ENCODE measurements at regions of chr7 and their contacts with region 1.

Region 1: DNA sequence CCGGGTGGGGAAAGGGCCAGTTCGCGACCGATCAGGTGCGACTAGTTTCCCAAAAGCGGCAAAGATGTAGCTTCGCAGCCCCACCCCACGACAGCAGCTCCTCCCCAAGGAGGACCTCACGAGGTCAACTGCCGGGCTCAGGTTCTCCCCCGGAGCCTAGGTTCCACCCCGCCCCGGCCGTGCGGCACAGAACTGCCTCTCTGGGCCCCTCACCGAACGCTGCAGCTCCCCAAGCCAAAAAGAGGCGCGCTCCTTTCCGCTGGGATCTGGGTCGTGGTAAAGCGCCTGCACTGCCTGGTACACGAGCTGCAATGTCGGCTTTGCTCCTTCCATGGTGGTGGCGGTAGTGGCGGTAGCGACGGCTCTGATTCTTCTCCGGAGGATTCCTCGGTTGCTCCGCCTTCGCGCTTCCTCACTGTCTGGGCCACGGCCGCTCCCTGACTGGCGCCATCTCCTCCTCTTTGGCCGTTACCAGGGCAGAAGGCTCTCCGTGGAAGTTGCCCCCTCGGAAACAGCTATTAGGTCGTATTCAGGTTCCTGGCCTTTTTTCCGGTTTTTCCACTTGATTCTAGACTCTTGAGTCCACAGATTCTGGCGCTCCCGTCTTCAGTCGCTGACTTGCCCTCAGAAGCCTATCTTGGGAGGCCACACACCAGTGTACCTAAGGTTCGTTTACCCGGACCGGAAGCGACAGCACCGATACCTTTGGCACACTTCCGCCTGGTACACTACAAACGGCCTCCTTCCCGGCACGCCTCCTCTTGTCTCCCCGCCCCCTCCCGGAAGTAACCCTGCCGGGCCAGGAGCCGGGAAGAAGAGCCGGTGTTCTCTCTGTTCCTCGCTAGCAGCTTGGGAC is at the start of gene TNPO3:
- DNase-seq: peak; percentile 95
- H3K4me3 ChIP-seq: peak within 1 kb of the TSS; percentile 95
- H3K27ac ChIP-seq: peak within 1 kb of the TSS; percentile 88
- H3K4me1 ChIP-seq: peaks cover 36% of the 10 kb centered on the region
- CTCF ChIP-seq: peak; percentile 36; the same call in 1 of the 2 replicates
- total RNA-seq, gene TNPO3: 51.4 and 55.1 TPM in 2 replicates

Region 2: DNA sequence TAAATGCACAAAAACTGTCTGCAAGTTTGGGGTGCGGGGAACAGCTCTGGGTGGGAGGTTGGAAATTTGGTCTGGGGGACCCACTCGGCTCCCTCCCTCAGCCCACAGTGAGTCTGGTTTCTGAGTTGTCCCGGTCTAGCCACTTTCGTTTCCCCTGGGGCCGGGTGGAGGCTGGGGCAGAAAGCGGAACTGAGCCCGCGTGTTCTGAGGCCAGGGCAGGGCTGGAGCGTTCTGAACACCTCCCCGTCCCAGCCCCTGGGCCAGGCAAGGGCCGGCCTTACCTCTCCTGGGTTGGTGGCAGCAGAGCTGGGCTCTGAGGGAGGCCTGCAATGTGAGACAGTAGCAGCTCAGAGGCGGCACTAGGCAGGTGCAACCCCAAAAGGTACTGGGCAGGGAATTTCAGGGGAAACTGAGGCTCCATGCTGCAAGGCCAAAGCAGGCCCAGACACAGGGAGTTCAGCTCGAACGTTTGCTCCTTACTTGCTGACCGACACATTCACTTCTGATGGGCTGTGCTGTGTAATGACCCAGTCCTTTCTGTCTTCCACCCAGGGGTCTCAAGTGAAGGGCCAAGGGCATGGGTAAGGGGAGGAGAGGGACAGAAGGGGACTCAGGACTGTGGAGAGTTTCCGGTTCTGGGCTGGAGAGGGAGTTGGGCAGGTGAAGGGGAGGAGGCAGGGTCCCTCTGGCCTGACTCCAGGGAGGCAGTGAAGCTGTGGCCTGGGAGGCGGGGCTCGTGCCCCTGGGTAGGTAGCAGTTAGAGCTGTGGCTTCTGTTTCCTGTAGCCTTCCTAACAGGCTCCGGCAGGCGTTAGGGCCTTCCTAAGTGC is 114.0 kb before region 1 on chr7:
- CTCF ChIA-PET with region 1: interaction called, 6 read pairs
- POLR2A ChIA-PET with region 1: interaction called, 12 read pairs
- intact Hi-C with region 1: no loop called
- DNase-seq: peak; percentile 93
- H3K4me3 ChIP-seq: peak overlapping the region; percentile 60
- H3K27ac ChIP-seq: peak overlapping the region; percentile 75
- H3K4me1 ChIP-seq: peaks cover 37% of the 10 kb centered on the region
- CTCF ChIP-seq: 0 out of 2 replicates have a peak, but pooled peaks have one; percentile 4

Region 3: GRCh38 chr7:128954830-128955802 is 99.5 kb before region 1 on chr7:
- CTCF ChIA-PET with region 1: no interaction called
- POLR2A ChIA-PET with region 1: interaction called, 3 read pairs
- intact Hi-C with region 1: loop called (anchors 5 kb)
- DNase-seq: peak; percentile 74
- H3K4me3 ChIP-seq: peak overlapping the region; percentile 44
- H3K27ac ChIP-seq: peak overlapping the region; percentile 87
- H3K4me1 ChIP-seq: peaks cover 42% of the 10 kb centered on the region
- CTCF ChIP-seq: peak; percentile 43; the same call in 1 of the 2 replicates

Region 4: DNA sequence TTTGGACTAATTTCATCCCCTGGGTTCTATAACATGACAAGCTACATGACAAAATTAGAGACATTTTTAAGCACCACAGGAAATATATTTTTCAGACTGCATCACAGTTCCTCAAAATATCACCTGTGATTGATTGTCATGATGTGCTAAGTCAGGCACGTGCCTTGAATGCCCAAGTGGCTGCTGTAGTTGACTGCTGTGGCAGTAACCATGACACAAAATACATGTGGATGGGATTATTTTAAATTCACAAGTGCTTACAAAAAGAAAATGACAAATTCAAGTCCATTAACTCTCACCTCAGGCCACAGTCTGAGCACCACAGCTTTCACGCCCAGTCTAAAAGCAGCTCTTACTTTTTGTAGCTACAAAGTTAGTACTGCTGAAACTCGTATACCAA is 45.2 kb before region 1 on chr7:
- CTCF ChIA-PET with region 1: no interaction called
- POLR2A ChIA-PET with region 1: interaction called, 25 read pairs
- intact Hi-C with region 1: loop called (anchors 1 kb)
- DNase-seq: peak; percentile 91
- H3K4me3 ChIP-seq: peak overlapping the region; percentile 48
- H3K27ac ChIP-seq: peak overlapping the region; percentile 95
- H3K4me1 ChIP-seq: peaks cover 67% of the 10 kb centered on the region
- CTCF ChIP-seq: no peak

Region 5: DNA sequence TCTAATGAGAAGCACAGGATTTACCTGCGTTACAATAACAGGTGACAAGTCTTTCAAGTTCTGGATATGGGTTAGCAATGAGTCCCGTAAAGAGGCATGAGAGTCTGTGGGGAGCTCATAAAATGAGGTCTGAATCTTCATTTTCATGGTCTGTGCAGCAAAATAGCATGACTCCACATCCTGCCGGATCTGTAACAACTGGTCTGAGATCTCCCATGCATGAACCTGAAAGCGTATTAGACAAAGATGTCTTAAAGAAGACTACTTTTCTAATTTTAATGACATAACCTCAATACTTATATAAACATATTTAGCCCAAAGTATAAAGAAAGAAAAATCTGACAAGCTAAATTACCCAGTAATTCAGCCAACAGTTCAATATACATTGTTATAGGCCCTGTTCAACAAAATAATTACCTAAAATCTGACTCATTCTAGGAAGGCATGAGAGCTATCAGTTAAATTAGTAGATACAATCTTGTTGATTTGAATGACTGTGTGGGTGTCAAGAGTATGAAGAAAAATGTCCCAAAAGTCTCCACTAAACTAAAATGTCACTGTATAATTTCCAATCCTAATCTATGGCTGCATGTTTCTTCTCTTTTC is 36.6 kb before region 1 on chr7:
- CTCF ChIA-PET with region 1: no interaction called
- POLR2A ChIA-PET with region 1: interaction called, 5 read pairs
- intact Hi-C with region 1: loop called (anchors 2 kb)
- DNase-seq: peak; percentile 82
- H3K4me3 ChIP-seq: peak overlapping the region; percentile 22
- H3K27ac ChIP-seq: peak overlapping the region; percentile 79
- H3K4me1 ChIP-seq: peaks cover 45% of the 10 kb centered on the region
- CTCF ChIP-seq: no peak

Region 6: DNA sequence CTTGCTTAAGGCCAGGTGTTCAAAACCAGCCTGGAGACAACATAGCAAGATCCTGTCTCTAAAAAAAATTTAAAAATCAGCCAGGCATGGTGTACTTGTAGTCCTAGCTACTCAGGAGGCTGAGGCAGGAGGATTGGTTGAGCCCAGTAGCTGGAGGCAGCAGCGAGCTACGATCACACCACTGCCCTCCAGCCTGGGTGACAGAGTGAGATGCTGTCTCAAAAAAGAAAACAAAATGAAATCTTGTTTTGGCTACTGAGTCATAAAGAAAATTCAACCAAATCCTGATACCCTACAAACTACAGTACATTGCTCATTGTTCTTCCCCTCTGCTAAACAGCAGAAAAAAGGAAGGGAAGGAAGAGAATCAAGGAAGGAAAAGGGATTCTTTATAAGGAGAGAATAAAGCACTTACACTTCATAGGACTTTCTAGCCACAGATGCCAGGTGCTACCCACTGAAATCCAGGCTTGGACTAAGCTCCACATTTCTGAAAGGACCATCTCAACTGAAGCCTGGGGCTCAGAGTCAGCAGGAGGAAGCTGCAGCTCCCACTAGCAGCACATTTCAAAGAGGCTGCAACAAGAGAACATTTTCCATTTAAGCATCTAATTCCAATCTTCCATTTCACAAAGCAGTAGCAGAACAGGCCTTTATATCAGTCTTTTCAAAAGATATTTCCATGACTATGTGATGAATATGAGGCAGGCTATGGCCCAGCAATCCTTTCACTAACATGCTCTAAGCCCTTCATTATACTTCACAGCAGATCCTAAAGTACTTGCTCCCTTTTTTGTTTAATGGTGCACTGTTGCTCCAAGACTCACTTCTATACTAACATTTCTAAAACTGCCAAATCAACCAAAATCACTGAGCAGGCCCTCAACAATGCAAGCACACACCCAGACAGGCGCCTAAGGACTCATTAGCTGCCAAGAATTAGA is 13.3 kb before region 1 on chr7:
- CTCF ChIA-PET with region 1: no interaction called
- POLR2A ChIA-PET with region 1: interaction called, 35 read pairs
- intact Hi-C with region 1: no loop called
- DNase-seq: peak; percentile 56
- H3K4me3 ChIP-seq: peak overlapping the region; percentile 2
- H3K27ac ChIP-seq: peak overlapping the region; percentile 54
- H3K4me1 ChIP-seq: peaks cover 56% of the 10 kb centered on the region
- CTCF ChIP-seq: peak; percentile 36; the same call in 1 of the 2 replicates